ENCODE measurements at regions of chr1 and their contacts with region 1.

Region 1: GRCh38 chr1:16078925-16079656 is 5.6 kb upstream of the FAM131C start:
- DNase-seq: no peak

Region 2: DNA sequence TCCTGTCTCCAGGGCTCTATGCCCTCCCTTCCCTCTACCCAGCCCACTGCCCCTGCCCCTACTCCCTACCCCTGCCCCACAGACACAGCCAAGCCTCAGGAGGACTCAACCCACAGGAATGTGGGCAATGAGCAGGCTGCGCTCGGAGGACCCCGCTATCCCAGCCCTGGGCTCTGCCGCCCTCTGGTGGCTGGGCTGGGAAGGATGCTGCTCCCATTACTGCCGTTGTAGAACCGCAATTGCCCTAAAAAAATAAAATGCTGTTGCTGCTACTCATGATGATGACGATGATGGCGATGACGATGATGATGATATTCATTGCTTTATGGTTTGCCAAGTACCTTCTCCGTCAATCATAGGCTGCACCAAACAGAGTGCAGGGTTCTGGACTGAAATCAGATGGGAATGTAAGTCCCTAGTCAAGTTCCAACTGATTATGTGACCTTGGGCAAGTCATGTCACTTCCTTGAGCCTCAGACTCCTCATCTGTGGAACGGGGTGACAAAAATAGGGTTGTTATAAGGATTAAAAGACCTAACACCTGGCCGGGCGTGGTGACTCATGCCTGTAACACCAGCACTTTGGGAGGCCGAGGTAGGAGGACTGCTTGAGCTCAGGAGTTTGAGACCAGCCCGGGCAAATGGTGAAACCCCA is 108.8 kb after region 1 on chr1:
- intact Hi-C with region 1: loop called (anchors 1 kb)
- DNase-seq: no peak